WTC11 (cell line): ENCODE measurements at regions of chr7 and their contacts with region 1.

Region 1: DNA sequence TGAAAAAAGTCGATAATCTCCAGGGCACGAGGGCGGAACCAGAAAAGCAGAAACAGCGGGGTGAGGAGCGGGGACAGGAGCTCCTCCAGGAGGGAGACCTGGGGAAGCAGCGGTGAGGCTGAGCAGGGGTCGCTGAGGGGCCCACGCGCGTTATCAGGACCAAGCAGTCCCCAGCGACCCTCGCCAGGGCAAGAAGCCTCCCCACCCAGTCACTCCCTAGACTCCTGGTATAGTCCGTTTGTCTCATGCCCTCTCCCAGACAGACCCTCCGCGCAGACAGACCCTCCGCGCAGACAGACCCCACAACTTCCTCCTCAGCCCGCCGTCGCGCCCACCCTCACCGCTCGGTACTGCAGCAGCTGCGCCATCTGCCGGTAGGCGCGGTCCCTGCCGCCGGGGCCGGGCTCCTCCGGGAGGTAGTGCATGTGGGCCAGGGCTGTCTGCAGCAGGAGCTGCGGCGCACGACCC is 6.3 kb downstream of the ATG9B start:
- DNase-seq: peak; percentile 95
- ATAC-seq: peak; percentile 69
- H3K4me3 Mint-ChIP-seq: peak overlapping the region; percentile 68
- H3K27ac Mint-ChIP-seq: no peak overlapping the region
- H3K4me1 Mint-ChIP-seq: peaks cover 39% of the 10 kb centered on the region
- H3K27me3 Mint-ChIP-seq: peaks cover 82% of the 10 kb centered on the region
- CTCF ChIP-seq: peak; percentile 83

Region 2: DNA sequence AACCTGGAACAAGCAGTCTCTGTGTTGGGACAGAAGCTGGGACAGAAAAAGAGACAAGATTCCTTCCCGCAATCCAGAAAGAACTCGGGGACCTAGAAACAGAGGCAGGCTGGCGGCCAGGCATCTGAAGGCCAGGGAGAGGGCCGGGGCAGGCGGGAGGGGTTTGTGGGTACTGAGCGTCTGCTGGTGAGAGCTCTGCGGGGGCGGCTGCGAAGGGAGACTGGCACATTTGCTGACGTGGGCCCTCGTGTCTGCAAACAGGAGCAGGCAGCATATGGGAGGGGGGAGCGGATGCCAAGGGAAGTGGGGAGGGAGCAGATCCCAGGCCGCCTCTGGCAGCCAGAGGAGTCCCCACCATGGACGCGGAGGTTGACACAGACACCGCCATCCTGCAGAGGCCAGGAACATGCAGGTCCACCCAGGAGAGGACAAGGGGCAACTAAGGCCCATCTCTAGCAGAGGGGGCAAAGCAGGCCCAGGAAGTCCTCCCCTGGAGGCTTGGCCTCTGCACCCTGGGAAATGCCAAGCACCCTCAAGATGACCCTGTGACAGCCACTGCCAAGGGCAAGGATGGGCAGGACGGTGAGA is 72.1 kb before region 1 on chr7:
- CTCF ChIA-PET with region 1: interaction called, 10 read pairs
- POLR2A ChIA-PET with region 1: no interaction called
- DNase-seq: no peak
- ATAC-seq: no peak
- H3K4me3 Mint-ChIP-seq: no peak overlapping the region
- H3K27ac Mint-ChIP-seq: no peak overlapping the region
- H3K4me1 Mint-ChIP-seq: peaks cover 48% of the 10 kb centered on the region
- H3K27me3 Mint-ChIP-seq: peaks cover 6% of the 10 kb centered on the region
- CTCF ChIP-seq: no peak

Region 3: GRCh38 chr7:150968734-150969372 is 49.1 kb before region 1 on chr7:
- CTCF ChIA-PET with region 1: interaction called, 30 read pairs
- POLR2A ChIA-PET with region 1: no interaction called
- DNase-seq: no peak
- ATAC-seq: no peak
- H3K4me3 Mint-ChIP-seq: no peak overlapping the region
- H3K27ac Mint-ChIP-seq: no peak overlapping the region
- H3K4me1 Mint-ChIP-seq: peaks cover 40% of the 10 kb centered on the region
- H3K27me3 Mint-ChIP-seq: no peaks in the 10 kb centered on the region
- CTCF ChIP-seq: no peak

Region 4: GRCh38 chr7:150988230-150989226 is 29.5 kb before region 1 on chr7:
- CTCF ChIA-PET with region 1: interaction called, 32 read pairs
- POLR2A ChIA-PET with region 1: interaction called, 3 read pairs
- DNase-seq: peak; percentile 93
- ATAC-seq: peak; percentile 68
- H3K4me3 Mint-ChIP-seq: peak overlapping the region; percentile 71
- H3K27ac Mint-ChIP-seq: no peak overlapping the region
- H3K4me1 Mint-ChIP-seq: peaks cover 32% of the 10 kb centered on the region
- H3K27me3 Mint-ChIP-seq: peaks cover 32% of the 10 kb centered on the region
- CTCF ChIP-seq: peak; percentile 92

Region 5: DNA sequence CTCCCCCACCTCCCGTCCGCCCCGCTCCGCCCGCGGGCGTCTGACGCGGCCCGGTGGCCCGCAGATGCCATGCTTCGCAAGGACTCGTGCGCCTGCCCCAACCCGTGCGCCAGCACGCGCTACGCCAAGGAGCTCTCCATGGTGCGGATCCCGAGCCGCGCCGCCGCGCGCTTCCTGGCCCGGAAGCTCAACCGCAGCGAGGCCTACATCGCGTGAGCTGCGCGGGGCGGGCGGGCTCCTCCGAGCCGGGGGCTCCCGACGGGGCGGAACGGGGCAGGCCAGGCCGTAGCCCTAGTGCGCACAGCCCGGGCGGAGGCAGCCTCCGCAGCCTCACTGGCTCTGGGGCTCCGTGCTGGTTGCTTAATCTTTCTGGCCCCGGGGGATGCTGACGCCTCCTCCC is 33.1 kb after region 1 on chr7:
- CTCF ChIA-PET with region 1: interaction called, 34 read pairs
- POLR2A ChIA-PET with region 1: no interaction called
- DNase-seq: peak; percentile 90
- ATAC-seq: peak; percentile 85
- H3K4me3 Mint-ChIP-seq: no peak overlapping the region
- H3K27ac Mint-ChIP-seq: no peak overlapping the region
- H3K4me1 Mint-ChIP-seq: peaks cover 3% of the 10 kb centered on the region; the same call in 1 of the 2 replicates
- H3K27me3 Mint-ChIP-seq: peaks cover 34% of the 10 kb centered on the region
- CTCF ChIP-seq: no peak

Region 6: GRCh38 chr7:151080522-151081169 is 62.7 kb after region 1 on chr7 and contains the start of gene FASTK:
- CTCF ChIA-PET with region 1: interaction called, 12 read pairs
- POLR2A ChIA-PET with region 1: interaction called, 3 read pairs
- DNase-seq: peak; percentile 84
- ATAC-seq: peak; percentile 45
- H3K4me3 Mint-ChIP-seq: peak within 1 kb of the TSS; percentile 87
- H3K27ac Mint-ChIP-seq: peak within 1 kb of the TSS; percentile 85; the same call in 1 of the 2 replicates
- H3K4me1 Mint-ChIP-seq: peaks cover 43% of the 10 kb centered on the region
- H3K27me3 Mint-ChIP-seq: peaks cover 3% of the 10 kb centered on the region; the same call in 1 of the 2 replicates
- CTCF ChIP-seq: no peak
- total RNA-seq, gene FASTK: 62.1 to 70.2 TPM (median 67.7 TPM) in 3 replicates